IMR-90 (cell line): ENCODE measurements at regions of chr12 and their contacts with region 1.

Region 1: GRCh38 chr12:52023182-52023975 is 16.6 kb downstream of the TAMALIN start:
- DNase-seq: peak; percentile 56
- ATAC-seq: peak; percentile 77
- H3K4me3 ChIP-seq: peak overlapping the region; percentile 52
- H3K27ac ChIP-seq: peak overlapping the region; percentile 41; the same call in 1 of the 2 replicates
- H3K4me1 ChIP-seq: peaks cover 6% of the 10 kb centered on the region; the same call in 1 of the 2 replicates
- H3K27me3 ChIP-seq: no peaks in the 10 kb centered on the region
- CTCF ChIP-seq: peak; percentile 96
- POLR2A ChIP-seq: no peak; the same call in none of the 2 replicates
- RAD21 ChIP-seq: peak; percentile 78

Region 2: GRCh38 chr12:51994959-51995358 is 28.4 kb before region 1 on chr12:
- CTCF ChIA-PET with region 1: interaction called, 23 read pairs
- POLR2A ChIA-PET with region 1: interaction called, 3 read pairs
- dilution Hi-C with region 1: no loop called
- in situ Hi-C with region 1: no loop called
- intact Hi-C with region 1: loop called (anchors 1 kb)
- DNase-seq: peak; percentile 57
- ATAC-seq: peak; percentile 41
- H3K4me3 ChIP-seq: no peak overlapping the region
- H3K27ac ChIP-seq: no peak overlapping the region; the same call in 1 of the 2 replicates
- H3K4me1 ChIP-seq: peaks cover 11% of the 10 kb centered on the region
- H3K27me3 ChIP-seq: no peaks in the 10 kb centered on the region
- CTCF ChIP-seq: no peak
- POLR2A ChIP-seq: no peak
- RAD21 ChIP-seq: no peak

Region 3: DNA sequence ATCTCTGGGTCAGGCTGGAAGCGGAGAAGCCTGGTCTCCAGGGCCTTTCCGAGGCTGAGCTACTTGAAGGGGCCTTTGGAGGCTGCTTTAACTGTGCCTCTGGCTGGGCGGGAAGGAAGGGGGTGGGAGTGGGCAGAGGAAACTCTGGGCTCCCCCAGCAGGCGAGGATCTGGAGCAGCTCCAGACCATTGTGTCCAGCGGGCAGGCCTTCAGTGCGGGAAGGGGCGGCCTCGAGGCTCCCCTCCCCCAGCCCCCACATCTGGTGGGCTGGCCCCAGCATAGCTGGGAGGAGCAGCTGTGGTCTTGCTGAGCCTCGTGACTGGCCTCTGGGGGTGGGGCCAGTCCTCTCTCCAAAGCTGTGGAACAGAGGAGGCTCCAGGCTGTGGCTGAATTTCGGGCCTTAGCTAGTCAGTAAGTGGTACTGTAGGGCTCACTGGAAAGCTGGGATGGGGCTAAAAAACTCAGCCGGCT is 13.2 kb before region 1 on chr12:
- CTCF ChIA-PET with region 1: interaction called, 128 read pairs
- POLR2A ChIA-PET with region 1: interaction called, 4 read pairs
- dilution Hi-C with region 1: no loop called
- in situ Hi-C with region 1: no loop called
- intact Hi-C with region 1: no loop called
- DNase-seq: peak; percentile 83
- ATAC-seq: peak; percentile 84
- H3K4me3 ChIP-seq: no peak overlapping the region
- H3K27ac ChIP-seq: peak overlapping the region; percentile 77
- H3K4me1 ChIP-seq: peaks cover 18% of the 10 kb centered on the region
- H3K27me3 ChIP-seq: no peaks in the 10 kb centered on the region
- CTCF ChIP-seq: no peak
- POLR2A ChIP-seq: no peak
- RAD21 ChIP-seq: no peak

Region 4: DNA sequence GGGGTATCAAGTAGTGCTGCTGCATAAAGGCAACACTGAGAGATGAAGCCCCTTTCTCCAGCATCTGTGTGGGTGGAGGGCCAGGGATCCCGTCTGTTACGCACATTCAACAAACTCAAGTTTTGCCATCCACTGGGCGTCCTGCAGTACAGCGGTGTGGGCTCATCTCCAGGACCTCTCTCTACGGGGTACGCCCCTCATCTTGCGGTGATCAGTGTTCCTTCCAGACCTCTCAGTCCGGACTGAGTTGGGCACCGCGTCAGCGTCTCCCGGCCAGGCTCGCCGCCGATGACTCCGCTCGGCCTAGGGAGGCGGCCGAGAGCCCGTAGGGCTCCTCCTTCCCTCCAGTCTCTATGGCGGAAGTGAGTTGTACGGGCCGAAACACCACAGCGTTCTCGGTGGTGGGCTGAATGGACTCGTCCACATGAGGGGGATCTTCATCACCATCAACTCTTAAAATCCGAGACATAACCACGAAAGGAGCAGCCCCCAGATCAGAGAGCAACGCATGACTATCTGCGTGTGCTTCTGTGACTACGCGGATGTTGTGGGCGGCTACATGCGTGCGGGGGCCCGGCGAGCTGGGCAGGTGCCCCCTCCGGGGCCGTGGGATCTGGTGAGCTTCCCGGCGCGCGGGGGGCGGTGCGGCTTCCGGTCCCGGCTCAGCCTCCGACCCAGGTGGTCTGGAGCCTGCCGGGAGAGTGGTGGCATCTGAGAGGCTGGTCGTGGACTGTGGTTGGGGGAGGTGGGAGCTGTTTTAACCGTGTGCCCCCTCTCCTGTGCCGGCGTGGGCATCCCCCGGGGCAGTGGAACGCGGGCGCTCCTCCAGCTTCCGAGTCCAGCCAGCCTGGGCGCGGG is 46.2 kb after region 1 on chr12 and contains the start of gene ATG101:
- CTCF ChIA-PET with region 1: interaction called, 14 read pairs
- POLR2A ChIA-PET with region 1: interaction called, 3 read pairs
- dilution Hi-C with region 1: no loop called
- in situ Hi-C with region 1: no loop called
- intact Hi-C with region 1: no loop called
- DNase-seq: peak; percentile 96
- ATAC-seq: peak; percentile 98
- H3K4me3 ChIP-seq: peak within 1 kb of the TSS; percentile 64
- H3K27ac ChIP-seq: peak within 1 kb of the TSS; percentile 89
- H3K4me1 ChIP-seq: peaks cover 11% of the 10 kb centered on the region
- H3K27me3 ChIP-seq: no peaks in the 10 kb centered on the region
- CTCF ChIP-seq: peak; percentile 92
- POLR2A ChIP-seq: peak; percentile 90
- RAD21 ChIP-seq: peak; percentile 31
- total RNA-seq, gene ATG101: 158 and 167 TPM in 2 replicates

Region 5: DNA sequence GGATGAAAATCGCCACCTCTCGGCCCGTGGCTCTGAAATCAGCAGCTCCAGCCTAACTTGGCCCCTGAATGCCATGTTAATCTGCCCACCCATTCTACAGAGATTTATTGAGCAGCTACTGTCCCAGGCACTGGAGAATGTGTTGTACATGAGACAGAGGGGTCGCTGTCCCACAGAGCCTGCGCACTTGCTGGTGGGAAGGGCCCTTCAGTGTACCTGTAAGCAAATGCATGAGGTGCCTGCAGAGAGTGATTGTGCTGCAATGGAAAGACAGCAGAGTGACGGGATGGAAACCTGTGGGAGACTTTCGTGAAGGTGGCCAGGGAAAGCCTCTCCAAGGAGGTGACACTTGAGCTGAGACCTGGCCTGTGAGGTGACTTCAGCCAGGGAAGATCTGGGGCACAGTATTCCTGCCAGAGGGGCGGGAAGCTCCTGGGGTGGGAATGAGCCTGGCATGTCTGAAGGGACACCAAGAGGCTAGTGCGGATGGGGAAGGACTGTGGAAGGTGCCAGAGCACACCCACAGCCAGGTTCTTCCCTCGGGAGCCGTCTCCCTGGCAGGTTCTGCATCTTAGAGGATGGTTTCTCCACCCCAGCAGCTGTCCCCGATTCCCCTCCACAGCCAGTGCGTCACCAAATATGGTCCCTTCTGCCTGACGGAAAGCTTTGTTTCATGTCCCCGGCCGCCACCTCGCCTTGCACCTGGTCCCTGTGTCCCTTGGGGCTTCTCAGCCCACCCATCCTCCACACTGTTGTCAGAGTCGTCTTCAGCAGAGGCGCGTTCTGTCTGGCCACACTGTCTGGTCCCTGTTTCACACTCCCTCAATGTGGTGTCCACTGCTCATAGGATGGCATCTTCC is 64.8 kb after region 1 on chr12:
- CTCF ChIA-PET with region 1: interaction called, 55 read pairs
- POLR2A ChIA-PET with region 1: no interaction called
- dilution Hi-C with region 1: no loop called
- in situ Hi-C with region 1: loop called (anchors 5 kb)
- intact Hi-C with region 1: loop called (anchors 1 kb)
- DNase-seq: no peak
- ATAC-seq: no peak
- H3K4me3 ChIP-seq: no peak overlapping the region
- H3K27ac ChIP-seq: no peak overlapping the region
- H3K4me1 ChIP-seq: peaks cover 2% of the 10 kb centered on the region; the same call in 1 of the 2 replicates
- H3K27me3 ChIP-seq: peaks cover 20% of the 10 kb centered on the region
- CTCF ChIP-seq: no peak
- POLR2A ChIP-seq: no peak
- RAD21 ChIP-seq: no peak